Kidney (tissue), 22 donors: ENCODE measurements at regions of chr6 and their contacts with region 1.

Region 1: DNA sequence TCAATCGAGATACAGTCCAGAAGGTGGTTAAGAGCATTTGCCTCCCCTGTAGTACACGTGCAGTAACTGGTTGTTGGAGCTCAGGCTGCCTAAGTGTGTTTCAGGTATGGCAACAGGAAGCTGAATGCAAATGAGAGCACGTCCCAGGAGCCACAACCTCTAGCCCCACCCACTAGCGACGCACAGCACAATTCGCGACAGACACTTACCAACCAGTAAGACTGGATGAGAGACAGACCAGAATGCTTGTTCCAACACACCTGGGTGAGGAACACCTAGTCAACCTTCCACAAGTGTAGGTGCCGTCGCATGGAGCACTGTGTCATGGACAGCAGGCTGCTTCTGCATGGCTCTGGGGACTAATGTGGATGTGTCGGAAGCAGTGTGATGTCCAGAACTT is 7.2 kb upstream of the SERPINB1 start:
- DNase-seq: no peak
- H3K4me3 ChIP-seq: no peak overlapping the region
- H3K27ac ChIP-seq: no peak overlapping the region
- H3K4me1 ChIP-seq: peaks cover 0 to 15% (median 3%) of the 10 kb centered on the region in 3 donors
- H3K27me3 ChIP-seq: no peaks in the 10 kb centered on the region
- CTCF ChIP-seq: no peak

Region 2: GRCh38 chr6:2931970-2932748 is 83.3 kb after region 1 on chr6:
- intact Hi-C with region 1: loop called (anchors 5 kb)
- DNase-seq: peak in 4 of 5 donors; percentile 84 to 89 (median 84)
- H3K4me3 ChIP-seq: peak overlapping the region in 2 of 3 donors; percentile 5 to 41
- H3K27ac ChIP-seq: no peak overlapping the region
- H3K4me1 ChIP-seq: peaks cover 0 to 2% (median 0%) of the 10 kb centered on the region in 3 donors
- H3K27me3 ChIP-seq: no peaks in the 10 kb centered on the region
- CTCF ChIP-seq: peak; percentile 98

Region 3: GRCh38 chr6:3456755-3457466 is 608.1 kb after region 1 on chr6 and contains the start of gene SLC22A23:
- intact Hi-C with region 1: no loop called
- DNase-seq: peak; percentile 86 to 92 (median 89)
- H3K4me3 ChIP-seq: peak within 1 kb of the TSS; percentile 27 to 81 (median 72)
- H3K27ac ChIP-seq: no peak within 1 kb of the TSS
- H3K4me1 ChIP-seq: peaks cover 3 to 21% (median 3%) of the 10 kb centered on the region in 3 donors
- H3K27me3 ChIP-seq: peaks cover 16% of the 10 kb centered on the region
- CTCF ChIP-seq: peak; percentile 75
- total RNA-seq, gene SLC22A23: 5.3 TPM